ENCODE measurements at regions of chr2 and their contacts with region 1.

Region 1: DNA sequence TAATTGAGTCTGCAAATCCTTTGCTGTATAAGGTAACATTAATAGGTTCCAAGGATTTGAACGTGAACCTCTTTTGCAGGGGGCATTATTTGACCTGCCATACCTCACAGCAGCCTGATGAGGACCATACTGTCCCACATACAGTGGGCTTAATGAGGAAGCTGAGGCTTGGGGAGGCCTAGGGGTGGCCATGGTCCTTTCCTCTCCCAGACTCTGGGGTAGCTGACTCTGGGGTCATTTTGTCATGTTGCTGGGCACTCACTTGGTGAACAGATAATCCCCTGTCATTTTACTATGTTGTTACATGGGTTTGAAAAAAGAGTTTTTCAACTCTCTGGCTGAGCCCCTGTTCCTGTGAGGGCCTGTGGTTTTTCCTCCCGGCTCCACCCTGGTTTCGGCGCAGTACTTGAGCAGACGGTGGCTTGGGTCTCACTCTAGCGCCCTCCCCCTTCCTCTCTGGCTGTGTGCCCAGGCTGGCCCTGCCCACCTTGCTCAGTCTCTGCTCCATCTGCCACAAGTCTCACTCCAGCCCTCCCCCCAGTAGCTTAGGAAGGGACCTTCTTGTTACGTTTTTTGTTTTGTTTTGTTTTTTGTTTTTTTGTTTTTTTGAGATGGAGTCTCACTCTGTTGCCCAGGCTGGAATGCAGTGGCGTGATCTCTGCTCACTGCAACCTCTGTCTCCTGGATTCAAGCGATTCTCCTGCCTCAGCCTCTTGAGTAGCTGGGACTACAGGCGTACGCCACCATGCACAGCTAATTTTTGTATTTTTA is 21.0 kb downstream of the INPP4A start:
- DNase-seq: no peak
- ATAC-seq: peak; percentile 13
- H3K4me3 Mint-ChIP-seq: peak overlapping the region; percentile 56
- H3K27ac Mint-ChIP-seq: peak overlapping the region; percentile 94
- H3K4me1 Mint-ChIP-seq: peaks cover 70% of the 10 kb centered on the region
- H3K27me3 Mint-ChIP-seq: no peaks in the 10 kb centered on the region
- CTCF ChIP-seq: no peak

Region 2: GRCh38 chr2:98372121-98372520 is 93.5 kb before region 1 on chr2:
- CTCF ChIA-PET with region 1: no interaction called
- POLR2A ChIA-PET with region 1: no interaction called
- intact Hi-C with region 1: no loop called
- DNase-seq: no peak
- ATAC-seq: no peak
- H3K4me3 Mint-ChIP-seq: no peak overlapping the region
- H3K27ac Mint-ChIP-seq: no peak overlapping the region
- H3K4me1 Mint-ChIP-seq: no peaks in the 10 kb centered on the region
- H3K27me3 Mint-ChIP-seq: peaks cover 43% of the 10 kb centered on the region
- CTCF ChIP-seq: no peak

Region 3: DNA sequence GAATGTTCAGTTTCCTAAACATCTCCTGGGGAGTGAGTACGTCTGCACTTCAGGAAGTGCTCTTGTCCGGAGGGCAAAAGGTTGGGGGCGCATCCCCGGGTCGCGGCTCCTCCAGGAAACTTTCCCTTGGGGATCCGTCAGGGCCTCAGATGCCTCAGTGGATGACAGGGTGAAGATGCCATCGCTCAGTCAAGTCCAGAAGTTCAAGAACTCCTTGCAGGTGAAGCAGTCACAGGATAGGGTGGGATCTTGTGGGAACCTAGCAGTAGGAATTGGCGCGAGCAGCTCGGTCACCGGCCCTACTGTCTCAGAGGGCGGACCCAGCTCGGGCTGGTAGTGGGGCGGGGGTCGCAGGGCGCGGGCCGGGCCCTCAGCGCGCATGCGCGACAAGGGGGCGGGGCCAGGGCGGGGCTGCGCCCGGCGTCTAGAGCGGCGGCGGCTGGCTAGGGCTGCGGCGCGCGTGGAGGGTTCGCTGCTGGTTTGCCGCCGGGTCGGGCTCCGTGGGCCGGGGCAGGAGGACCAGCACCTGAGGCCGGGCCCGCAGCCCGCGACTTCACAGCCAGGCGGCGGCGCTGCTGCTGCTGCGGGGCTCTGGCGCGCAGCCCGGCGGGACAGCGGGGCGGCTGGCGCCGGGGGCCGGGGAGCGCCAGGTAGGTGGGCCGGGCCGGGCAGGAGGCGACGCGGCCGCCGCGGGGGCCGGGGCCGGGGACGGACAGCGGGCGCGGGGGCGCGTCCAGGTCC is 21.0 kb before region 1 on chr2 and contains the start of gene INPP4A:
- CTCF ChIA-PET with region 1: interaction called, 3 read pairs
- POLR2A ChIA-PET with region 1: interaction called, 3 read pairs
- intact Hi-C with region 1: loop called (anchors 1 kb)
- DNase-seq: peak; percentile 79
- ATAC-seq: peak; percentile 93
- H3K4me3 Mint-ChIP-seq: peak within 1 kb of the TSS; percentile 90
- H3K27ac Mint-ChIP-seq: peak within 1 kb of the TSS; percentile 82
- H3K4me1 Mint-ChIP-seq: peaks cover 23% of the 10 kb centered on the region
- H3K27me3 Mint-ChIP-seq: no peaks in the 10 kb centered on the region
- CTCF ChIP-seq: no peak
- total RNA-seq, gene INPP4A: 19.6 and 26.6 TPM in 2 replicates

Region 4: DNA sequence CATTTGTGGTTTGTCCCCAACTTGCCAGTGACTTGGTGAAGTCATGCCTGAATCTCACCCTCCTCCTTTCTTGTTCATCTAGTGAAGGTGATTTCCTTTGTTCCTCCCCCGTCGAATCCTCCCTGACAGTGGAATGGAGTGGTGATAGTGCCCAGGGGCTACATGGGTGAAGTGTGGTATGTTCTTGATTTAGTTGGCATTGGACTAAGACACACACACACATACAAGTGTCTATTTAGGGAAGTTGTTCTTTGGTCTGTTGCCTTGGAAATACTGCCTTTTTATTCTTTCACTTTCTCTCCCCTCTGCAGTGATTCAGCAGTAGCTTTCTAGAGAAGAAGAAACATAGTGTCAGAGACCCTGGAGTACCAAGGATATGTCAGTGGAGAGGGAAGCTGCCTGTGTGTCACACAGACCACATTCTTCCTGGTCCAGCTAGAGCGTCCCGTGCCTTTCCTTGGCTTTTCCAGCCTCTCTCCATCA is 10.1 kb before region 1 on chr2:
- CTCF ChIA-PET with region 1: interaction called, 4 read pairs
- POLR2A ChIA-PET with region 1: interaction called, 11 read pairs
- intact Hi-C with region 1: loop called (anchors 1 kb)
- DNase-seq: no peak
- ATAC-seq: peak; percentile 83
- H3K4me3 Mint-ChIP-seq: peak overlapping the region; percentile 67
- H3K27ac Mint-ChIP-seq: peak overlapping the region; percentile 81
- H3K4me1 Mint-ChIP-seq: peaks cover 63% of the 10 kb centered on the region
- H3K27me3 Mint-ChIP-seq: no peaks in the 10 kb centered on the region
- CTCF ChIP-seq: no peak

Region 5: GRCh38 chr2:98479959-98480524 is 14.4 kb after region 1 on chr2:
- CTCF ChIA-PET with region 1: interaction called, 7 read pairs
- POLR2A ChIA-PET with region 1: interaction called, 9 read pairs
- intact Hi-C with region 1: loop called (anchors 1 kb)
- DNase-seq: no peak
- ATAC-seq: peak; percentile 37
- H3K4me3 Mint-ChIP-seq: no peak overlapping the region
- H3K27ac Mint-ChIP-seq: no peak overlapping the region
- H3K4me1 Mint-ChIP-seq: peaks cover 72% of the 10 kb centered on the region
- H3K27me3 Mint-ChIP-seq: no peaks in the 10 kb centered on the region
- CTCF ChIP-seq: no peak

Region 6: DNA sequence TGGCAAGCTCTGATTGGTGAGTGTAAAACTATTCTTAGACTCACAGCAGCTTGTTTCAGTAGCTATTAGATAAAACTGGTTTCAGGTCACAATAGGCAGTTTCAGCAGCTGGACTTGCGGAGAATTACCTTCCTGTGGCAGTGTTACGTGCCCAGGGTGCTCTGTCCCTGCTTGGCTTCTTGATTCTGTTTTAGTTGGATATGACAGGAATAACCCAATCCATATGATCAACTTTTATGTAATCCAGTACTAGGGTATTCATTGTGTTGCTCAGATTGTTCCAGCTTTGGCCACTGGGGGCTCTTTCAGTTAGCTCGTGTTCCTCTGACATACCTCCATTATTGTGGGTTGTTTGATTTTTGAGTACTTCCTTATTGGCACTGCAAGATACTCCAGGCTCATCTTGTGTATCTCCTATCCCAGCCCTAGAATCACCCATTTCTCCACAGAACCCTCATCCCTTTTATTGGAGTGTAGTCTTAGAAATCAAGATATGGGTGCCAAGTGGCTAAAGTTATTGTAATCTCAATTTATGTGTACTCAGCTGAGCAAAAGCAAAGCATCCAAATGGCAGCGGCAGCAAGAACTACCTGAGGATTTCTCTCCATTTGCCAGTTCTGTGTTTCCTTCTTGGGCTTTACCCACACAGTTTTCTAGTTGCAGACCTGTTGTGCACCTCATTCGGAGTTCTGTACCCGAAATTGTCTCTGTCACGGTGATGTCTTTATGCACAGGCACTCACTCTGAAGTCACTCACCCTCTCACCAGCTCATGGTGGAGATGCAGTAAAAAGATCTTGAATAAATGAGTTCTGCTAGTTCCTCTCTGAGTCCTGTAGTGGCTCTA is 22.4 kb after region 1 on chr2:
- CTCF ChIA-PET with region 1: interaction called, 11 read pairs
- POLR2A ChIA-PET with region 1: interaction called, 5 read pairs
- intact Hi-C with region 1: loop called (anchors 1 kb)
- DNase-seq: no peak
- ATAC-seq: peak; percentile 78
- H3K4me3 Mint-ChIP-seq: no peak overlapping the region
- H3K27ac Mint-ChIP-seq: no peak overlapping the region
- H3K4me1 Mint-ChIP-seq: peaks cover 33% of the 10 kb centered on the region
- H3K27me3 Mint-ChIP-seq: no peaks in the 10 kb centered on the region
- CTCF ChIP-seq: peak; percentile 17